ENCODE measurements at regions of chr3 and their contacts with region 1.

Region 1: GRCh38 chr3:70358978-70359580 is 46.6 kb upstream of the MDFIC2 start:
- DNase-seq: peak; percentile 32
- H3K4me3 Mint-ChIP-seq: no peak overlapping the region
- H3K27ac Mint-ChIP-seq: no peak overlapping the region
- H3K4me1 Mint-ChIP-seq: peaks cover 2% of the 10 kb centered on the region
- H3K27me3 Mint-ChIP-seq: peaks cover 10% of the 10 kb centered on the region

Region 2: GRCh38 chr3:70064194-70064779 is 294.8 kb before region 1 on chr3:
- CTCF ChIA-PET with region 1: no interaction called
- intact Hi-C with region 1: loop called (anchors 1 kb)
- DNase-seq: peak; percentile 26
- H3K4me3 Mint-ChIP-seq: no peak overlapping the region
- H3K27ac Mint-ChIP-seq: no peak overlapping the region
- H3K4me1 Mint-ChIP-seq: no peaks in the 10 kb centered on the region
- H3K27me3 Mint-ChIP-seq: peaks cover 15% of the 10 kb centered on the region

Region 3: GRCh38 chr3:70090322-70090913 is 268.7 kb before region 1 on chr3:
- CTCF ChIA-PET with region 1: no interaction called
- intact Hi-C with region 1: loop called (anchors 10 kb)
- DNase-seq: no peak
- H3K4me3 Mint-ChIP-seq: no peak overlapping the region
- H3K27ac Mint-ChIP-seq: no peak overlapping the region
- H3K4me1 Mint-ChIP-seq: no peaks in the 10 kb centered on the region
- H3K27me3 Mint-ChIP-seq: peaks cover 8% of the 10 kb centered on the region

Region 4: DNA sequence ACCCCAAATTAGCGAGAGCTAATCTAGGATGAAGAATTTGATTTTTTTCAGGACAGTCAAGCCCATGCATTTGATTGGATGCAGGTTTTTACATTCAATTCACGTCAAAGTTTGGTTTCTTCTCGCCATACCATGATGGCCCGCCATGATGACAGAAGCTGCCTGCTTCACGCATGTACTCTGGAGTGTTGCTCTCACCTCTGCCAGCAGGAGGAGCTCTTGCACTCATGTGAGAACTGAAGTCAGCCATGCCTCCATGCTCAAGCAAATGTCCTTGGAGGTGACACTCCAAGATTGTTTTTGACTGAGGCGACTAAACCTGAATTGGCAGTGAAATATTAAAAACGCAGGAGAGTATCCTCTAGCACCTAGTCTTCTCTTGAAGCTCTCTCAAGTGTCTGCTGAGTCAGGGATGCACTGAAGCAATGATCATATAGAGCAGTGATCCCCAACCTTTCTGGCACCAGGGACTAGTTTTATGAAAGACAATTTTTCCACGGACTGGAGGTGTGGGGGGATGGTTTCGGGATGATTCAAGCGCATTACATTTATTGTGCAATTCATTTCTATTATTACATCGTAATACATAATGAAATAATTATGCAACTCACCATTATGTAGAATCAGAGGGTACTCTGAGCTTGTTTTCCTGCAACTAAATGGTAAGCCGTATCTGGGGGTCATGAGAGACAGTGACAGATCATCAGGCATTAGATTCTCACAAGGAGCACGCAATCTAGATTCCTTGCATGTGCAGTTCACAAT is 238.5 kb before region 1 on chr3:
- CTCF ChIA-PET with region 1: interaction called, 7 read pairs
- intact Hi-C with region 1: loop called (anchors 1 kb)
- DNase-seq: peak; percentile 84
- H3K4me3 Mint-ChIP-seq: no peak overlapping the region
- H3K27ac Mint-ChIP-seq: no peak overlapping the region
- H3K4me1 Mint-ChIP-seq: peaks cover 2% of the 10 kb centered on the region
- H3K27me3 Mint-ChIP-seq: peaks cover 8% of the 10 kb centered on the region

Region 5: GRCh38 chr3:70342149-70342548 is 16.9 kb before region 1 on chr3:
- CTCF ChIA-PET with region 1: no interaction called
- intact Hi-C with region 1: no loop called
- DNase-seq: no peak
- H3K4me3 Mint-ChIP-seq: no peak overlapping the region
- H3K27ac Mint-ChIP-seq: no peak overlapping the region
- H3K4me1 Mint-ChIP-seq: no peaks in the 10 kb centered on the region
- H3K27me3 Mint-ChIP-seq: peaks cover 6% of the 10 kb centered on the region

Region 6: DNA sequence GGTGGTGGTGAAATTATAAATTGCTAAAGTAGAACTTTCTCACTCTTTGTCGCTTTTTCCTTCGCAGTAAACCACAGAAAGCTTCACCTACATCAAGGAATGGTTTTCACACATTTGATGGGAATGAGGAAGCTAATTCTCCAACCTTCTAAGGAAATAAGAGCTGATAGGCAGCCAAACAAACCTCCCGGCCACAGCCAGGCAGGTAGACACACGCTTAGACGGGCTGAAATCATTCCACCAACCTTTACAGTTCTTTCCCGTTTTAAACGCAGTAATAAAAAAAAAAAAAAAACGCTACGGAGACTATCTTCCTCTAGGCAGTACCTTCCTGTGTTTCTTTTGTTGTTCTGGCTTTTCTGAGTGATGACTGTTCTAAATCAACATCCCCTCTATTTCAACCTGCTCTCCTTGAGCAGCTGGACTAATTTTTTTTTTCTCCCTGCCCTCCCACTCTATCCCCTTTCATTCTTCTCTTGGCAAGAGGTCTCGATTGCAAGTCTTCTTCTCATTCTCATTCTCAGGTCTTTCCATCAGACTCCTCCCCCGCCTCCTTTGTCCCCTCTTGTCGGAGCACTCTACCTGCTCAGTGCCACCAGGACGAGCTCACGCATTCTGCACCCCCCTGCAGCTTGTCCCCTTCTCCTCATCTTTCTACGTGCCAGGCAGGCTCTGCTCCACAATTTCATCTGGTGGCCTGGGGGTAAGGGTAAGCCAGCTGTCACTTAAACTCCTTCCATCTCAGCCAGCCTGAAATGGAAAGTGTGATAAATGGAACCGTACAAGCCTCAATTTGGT is 344.4 kb after region 1 on chr3:
- CTCF ChIA-PET with region 1: no interaction called
- intact Hi-C with region 1: no loop called
- DNase-seq: peak; percentile 10
- H3K4me3 Mint-ChIP-seq: no peak overlapping the region
- H3K27ac Mint-ChIP-seq: no peak overlapping the region
- H3K4me1 Mint-ChIP-seq: peaks cover 19% of the 10 kb centered on the region
- H3K27me3 Mint-ChIP-seq: peaks cover 15% of the 10 kb centered on the region

Measured in activated naive CD4-positive, alpha-beta T cell treated with anti-CD3 and anti-CD28 coated beads for 36 hours (primary cell).